Mammary epithelial cell (primary cell): ENCODE measurements at regions of chr2 and their contacts with region 1.

Region 1: DNA sequence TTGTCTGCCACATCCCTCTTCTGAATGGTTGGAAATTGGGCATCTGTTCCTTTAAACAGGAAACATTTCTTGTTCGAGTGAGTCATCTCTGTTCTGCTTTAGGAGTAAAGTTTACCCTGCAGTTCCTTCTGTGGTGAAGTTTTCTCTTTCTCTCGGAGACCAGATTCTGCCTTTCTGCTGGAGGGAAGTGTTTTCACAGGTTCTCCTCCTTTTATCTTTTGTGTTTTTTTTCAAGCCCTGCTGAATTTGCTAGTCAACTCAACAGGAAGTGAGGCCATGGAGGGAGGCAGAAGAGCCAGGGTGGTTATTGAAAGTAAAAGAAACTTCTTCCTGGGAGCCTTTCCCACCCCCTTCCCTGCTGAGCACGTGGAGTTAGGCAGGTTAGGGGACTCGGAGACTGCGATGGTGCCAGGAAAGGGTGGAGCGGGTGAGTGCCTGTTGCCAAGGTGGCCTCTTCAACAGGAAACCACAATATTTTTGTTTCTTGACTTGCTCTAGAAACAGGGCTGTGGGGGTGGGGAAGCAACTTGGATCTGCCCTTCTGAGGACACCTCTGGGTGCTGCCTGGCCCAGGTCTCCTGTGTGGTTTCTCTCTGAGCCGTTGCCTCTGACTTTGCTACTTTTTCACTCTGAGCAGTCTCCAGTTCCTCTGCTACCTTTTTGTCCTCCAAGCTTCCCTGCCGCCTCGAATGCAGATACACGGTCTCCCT is 2.2 kb upstream of the CASP8 start:
- DNase-seq: peak; percentile 91
- H3K4me3 ChIP-seq: peak overlapping the region; percentile 50 to 57 (median 54)
- H3K27ac ChIP-seq: peak overlapping the region; percentile 96
- H3K4me1 ChIP-seq: peaks cover 24% of the 10 kb centered on the region
- H3K27me3 ChIP-seq: no peaks in the 10 kb centered on the region
- CTCF ChIP-seq: peak in 1 of 2 donors; percentile 28

Region 2: DNA sequence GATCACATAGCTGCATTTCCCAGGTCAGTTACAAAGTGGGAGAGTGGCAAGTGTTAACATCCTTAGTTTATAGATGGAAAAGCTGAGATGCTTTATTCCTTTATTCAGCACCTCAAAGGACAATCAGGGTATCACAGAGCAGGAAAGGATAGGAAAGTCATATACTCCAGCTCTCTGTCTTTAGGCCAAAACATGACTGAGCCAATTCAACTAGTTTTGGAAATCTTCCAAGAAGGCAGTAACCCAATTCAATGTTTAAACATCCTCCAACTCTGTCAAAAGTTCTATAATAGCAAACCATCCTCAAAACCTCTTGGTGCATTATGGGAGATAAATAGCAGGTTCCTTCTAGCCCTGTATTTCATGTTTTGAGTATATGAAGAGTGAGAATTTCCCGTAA is 27.4 kb after region 1 on chr2:
- CTCF ChIA-PET with region 1: no interaction called
- dilution Hi-C with region 1: no loop called
- in situ Hi-C with region 1: no loop called
- intact Hi-C with region 1: no loop called
- DNase-seq: no peak
- H3K4me3 ChIP-seq: no peak overlapping the region
- H3K27ac ChIP-seq: no peak overlapping the region
- H3K4me1 ChIP-seq: no peaks in the 10 kb centered on the region
- H3K27me3 ChIP-seq: no peaks in the 10 kb centered on the region
- CTCF ChIP-seq: no peak

Region 3: GRCh38 chr2:201320701-201321100 is 62.6 kb after region 1 on chr2:
- CTCF ChIA-PET with region 1: no interaction called
- dilution Hi-C with region 1: loop called (anchors 5 kb)
- in situ Hi-C with region 1: no loop called
- intact Hi-C with region 1: no loop called
- DNase-seq: no peak
- H3K4me3 ChIP-seq: no peak overlapping the region
- H3K27ac ChIP-seq: no peak overlapping the region
- H3K4me1 ChIP-seq: no peaks in the 10 kb centered on the region
- H3K27me3 ChIP-seq: no peaks in the 10 kb centered on the region
- CTCF ChIP-seq: no peak